ENCODE measurements at regions of chr9 and their contacts with region 1.

Region 1: GRCh38 chr9:26892251-26893029 is at the start of gene CAAP1:
- DNase-seq: peak; percentile 83 to 96 (median 90)
- ATAC-seq: peak; percentile 93 to 94
- H3K4me3 Mint-ChIP-seq: peak within 1 kb of the TSS; percentile 99 to 100 (median 100)
- H3K27ac Mint-ChIP-seq: peak within 1 kb of the TSS; percentile 99 to 100 (median 100)
- H3K4me1 Mint-ChIP-seq: peaks cover 18 to 51% (median 42%) of the 10 kb centered on the region in 4 donors
- H3K27me3 Mint-ChIP-seq: no peaks in the 10 kb centered on the region
- polyA plus RNA-seq, gene CAAP1: 14.6 to 17.8 (median 16.2) TPM

Region 2: GRCh38 chr9:26946753-26947727 is 54.6 kb after region 1 on chr9 and contains the start of gene PLAA:
- POLR2A ChIA-PET with region 1: interaction called, 18 read pairs
- DNase-seq: peak; percentile 74 to 94 (median 82)
- ATAC-seq: peak; percentile 94
- H3K4me3 Mint-ChIP-seq: peak within 1 kb of the TSS; percentile 91 to 98 (median 97)
- H3K27ac Mint-ChIP-seq: peak within 1 kb of the TSS; percentile 97 to 100 (median 100)
- H3K4me1 Mint-ChIP-seq: peaks cover 22 to 54% (median 47%) of the 10 kb centered on the region in 4 donors
- H3K27me3 Mint-ChIP-seq: peaks cover 0 to 6% (median 0%) of the 10 kb centered on the region in 5 donors
- polyA plus RNA-seq, gene PLAA: 11.2 to 20.2 (median 14.6) TPM

Region 3: GRCh38 chr9:26955921-26956859 is 63.8 kb after region 1 on chr9 and contains the start of gene IFT74:
- POLR2A ChIA-PET with region 1: interaction called, 13 read pairs
- DNase-seq: peak; percentile 84 to 98 (median 94)
- ATAC-seq: peak; percentile 99 to 100
- H3K4me3 Mint-ChIP-seq: peak within 1 kb of the TSS; percentile 82 to 97 (median 92)
- H3K27ac Mint-ChIP-seq: peak within 1 kb of the TSS; percentile 95 to 99 (median 98)
- H3K4me1 Mint-ChIP-seq: peaks cover 12 to 38% (median 37%) of the 10 kb centered on the region in 4 donors
- H3K27me3 Mint-ChIP-seq: no peaks in the 10 kb centered on the region
- polyA plus RNA-seq, gene IFT74: 7.5 to 15.4 (median 9.3) TPM

Measured in naive thymus-derived CD8-positive, alpha-beta T cell (primary cell).